ENCODE measurements at regions of chr11 and their contacts with region 1.

Region 1: DNA sequence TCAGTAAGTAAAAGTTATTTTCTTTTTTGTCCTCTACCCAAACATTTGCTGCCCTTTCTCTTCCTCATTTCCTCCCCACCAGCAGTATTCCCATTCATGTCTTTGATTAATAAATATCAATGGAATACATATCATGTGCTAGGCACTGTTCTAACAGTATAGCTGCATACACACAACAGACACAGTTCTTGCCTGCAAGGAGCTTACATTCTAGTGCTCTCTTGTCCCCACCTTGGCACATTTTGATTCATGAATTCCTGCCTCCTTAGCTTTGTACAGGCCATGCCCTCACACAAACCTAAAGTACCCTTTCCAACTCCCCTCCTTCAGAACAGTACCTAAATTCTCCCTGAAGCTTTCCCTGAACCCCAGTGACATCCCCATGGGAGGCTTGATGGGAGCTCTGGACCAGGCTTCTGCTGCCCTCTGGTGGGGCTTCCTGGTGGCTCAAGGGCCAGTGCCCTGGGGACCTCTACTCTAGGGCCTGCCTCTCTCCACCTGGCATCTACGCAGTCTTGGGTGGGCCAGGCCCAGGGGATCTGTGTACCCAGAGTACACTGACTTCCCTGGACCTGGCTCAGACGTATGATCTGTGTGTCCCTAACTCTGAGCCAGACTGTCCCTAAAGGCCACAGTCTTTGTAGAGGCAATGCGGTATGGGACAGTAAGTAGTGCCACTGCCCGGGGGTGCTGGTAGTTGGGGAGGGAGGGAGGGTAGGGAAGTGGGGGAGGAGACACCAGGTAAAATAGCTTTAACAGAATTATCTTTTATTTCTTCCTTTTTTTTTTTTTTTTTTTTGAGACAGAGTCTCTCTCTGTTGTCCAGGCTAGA is 14.1 kb downstream of the RPS13 start:
- DNase-seq: peak; percentile 31
- H3K4me3 ChIP-seq: no peak overlapping the region
- CTCF ChIP-seq: peak; percentile 91

Region 2: DNA sequence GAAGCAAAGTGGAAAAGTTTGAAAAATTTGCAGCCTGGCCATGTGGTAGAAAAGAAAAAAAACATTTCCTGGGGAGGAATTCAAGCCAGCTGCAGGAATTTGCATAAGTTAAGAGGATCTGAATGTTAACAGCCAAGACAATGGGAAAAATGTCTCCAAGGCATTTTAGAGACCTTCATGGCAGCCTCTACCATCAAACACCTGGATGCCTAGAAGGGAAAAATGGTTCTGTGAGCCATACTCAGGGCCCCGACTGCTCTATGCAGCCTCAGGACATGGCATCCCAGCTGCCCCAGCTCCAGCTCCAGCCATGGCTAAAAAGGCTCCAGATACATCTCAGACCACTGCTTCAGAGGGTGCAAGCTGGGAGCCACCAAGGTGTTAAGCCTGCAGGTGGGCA is 557.9 kb before region 1 on chr11:
- in situ Hi-C with region 1: no loop called
- DNase-seq: no peak
- H3K4me3 ChIP-seq: no peak overlapping the region
- CTCF ChIP-seq: no peak

Region 3: GRCh38 chr11:16785520-16786128 is 277.8 kb before region 1 on chr11:
- in situ Hi-C with region 1: loop called (anchors 10 kb)
- DNase-seq: peak; percentile 62
- H3K4me3 ChIP-seq: no peak overlapping the region
- CTCF ChIP-seq: peak; percentile 97

Region 4: GRCh38 chr11:16935518-16936302 is 127.7 kb before region 1 on chr11:
- in situ Hi-C with region 1: loop called (anchors 5 kb)
- DNase-seq: peak; percentile 26
- H3K4me3 ChIP-seq: no peak overlapping the region
- CTCF ChIP-seq: peak; percentile 83

Region 5: DNA sequence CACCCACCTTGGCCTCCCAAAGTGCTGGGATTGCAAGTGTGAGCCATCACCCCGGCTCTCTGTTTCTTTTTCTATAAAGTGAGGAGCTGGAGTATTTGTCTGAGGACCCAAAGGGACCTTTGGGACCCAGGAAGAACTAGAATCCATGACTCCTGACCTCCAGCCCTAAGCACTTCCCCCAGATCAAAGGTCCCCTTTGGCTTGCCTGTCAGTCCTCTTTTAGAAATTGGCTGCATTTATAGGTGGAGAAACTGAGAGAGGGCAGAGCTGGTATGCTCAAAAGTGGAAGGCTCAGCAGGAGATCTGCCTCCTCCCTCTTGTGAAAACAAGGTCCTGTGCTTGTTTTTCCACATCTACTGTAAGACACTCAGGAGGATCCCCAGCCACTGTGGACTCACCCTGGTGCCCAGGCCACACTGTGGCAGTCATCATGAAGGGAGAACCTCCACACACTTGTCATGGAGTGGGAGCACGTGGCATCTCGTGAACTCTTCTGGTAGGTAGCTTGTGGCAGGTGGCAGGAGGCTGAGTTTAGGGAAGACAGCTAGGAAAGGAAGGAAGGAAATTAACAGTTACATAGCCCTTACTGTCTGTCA is 36.8 kb before region 1 on chr11:
- in situ Hi-C with region 1: no loop called
- DNase-seq: no peak
- H3K4me3 ChIP-seq: no peak overlapping the region
- CTCF ChIP-seq: no peak